ENCODE measurements at regions of chr1 and their contacts with region 1.

Region 1: DNA sequence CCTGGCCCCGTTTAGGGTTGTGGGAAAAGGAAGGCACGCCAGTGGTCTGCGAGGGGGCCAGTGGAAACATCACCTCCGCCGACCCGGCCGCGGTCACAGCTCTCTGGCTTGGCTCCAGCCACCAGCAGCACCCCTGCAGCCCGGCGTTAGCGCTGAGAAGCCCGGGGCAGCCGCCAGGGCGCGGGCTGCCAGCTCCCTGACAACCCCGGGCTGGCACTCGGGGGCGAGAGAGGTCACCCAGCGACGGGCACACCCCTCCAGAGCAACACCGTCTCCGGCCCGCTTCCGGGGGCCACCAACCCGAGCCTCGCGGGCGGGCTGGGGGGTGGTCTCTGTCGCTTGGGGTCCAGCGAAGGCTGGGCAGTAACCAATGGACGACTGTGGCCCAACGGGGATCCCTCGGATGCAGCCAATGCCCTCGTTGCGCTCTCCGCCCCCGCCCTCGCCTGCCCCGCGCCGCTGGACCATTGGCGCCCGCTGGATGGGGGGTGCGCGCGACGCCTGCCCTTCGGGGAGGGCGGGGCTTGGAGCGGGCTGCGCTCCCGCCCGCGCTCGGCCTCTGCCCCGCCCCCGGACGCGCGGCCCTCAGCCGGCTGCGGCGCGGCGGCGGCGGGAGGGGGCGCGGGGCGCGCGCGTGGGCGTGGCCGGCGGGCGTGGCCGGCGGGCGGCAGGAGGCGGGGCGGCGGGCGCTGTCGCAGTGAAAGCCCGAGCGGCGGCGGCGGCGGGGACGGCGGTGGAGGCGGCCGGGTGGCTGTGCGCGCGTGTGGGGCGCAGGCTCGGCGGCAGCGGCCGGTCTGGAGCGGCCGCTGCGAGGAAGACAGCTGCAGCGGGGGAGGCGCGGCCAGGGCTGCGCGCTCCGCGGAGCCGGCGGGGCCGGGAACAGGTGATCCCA is at the start of gene MAN1C1:
- DNase-seq: peak; percentile 71 to 89 (median 85)
- ATAC-seq: peak; percentile 91
- H3K4me3 ChIP-seq: peak within 1 kb of the TSS; percentile 76
- H3K4me3 Mint-ChIP-seq: peak within 1 kb of the TSS; percentile 78 to 99 (median 86)
- H3K27ac ChIP-seq: peak within 1 kb of the TSS; percentile 84
- H3K27ac Mint-ChIP-seq: peak within 1 kb of the TSS; percentile 67 to 93 (median 86)
- H3K4me1 ChIP-seq: peaks cover 13 to 37% of the 10 kb centered on the region in 2 donors
- H3K4me1 Mint-ChIP-seq: peaks cover 36 to 52% (median 45%) of the 10 kb centered on the region in 7 donors
- H3K27me3 ChIP-seq: no peaks in the 10 kb centered on the region
- H3K27me3 Mint-ChIP-seq: peaks cover 0 to 72% (median 0%) of the 10 kb centered on the region in 5 donors
- total RNA-seq, gene MAN1C1: 28.8 to 85.5 (median 69.9) TPM

Region 2: GRCh38 chr1:25487628-25488027 is 128.7 kb before region 1 on chr1:
- CTCF ChIA-PET with region 1: no interaction called
- POLR2A ChIA-PET with region 1: no interaction called
- intact Hi-C with region 1: no loop called
- DNase-seq: peak in 6 of 9 donors; percentile 30 to 48 (median 38)
- ATAC-seq: no peak
- H3K4me3 ChIP-seq: no peak overlapping the region
- H3K4me3 Mint-ChIP-seq: no peak overlapping the region
- H3K27ac ChIP-seq: no peak overlapping the region
- H3K27ac Mint-ChIP-seq: peak overlapping the region in 2 of 9 donors; percentile 7 to 65
- H3K4me1 ChIP-seq: no peaks in the 10 kb centered on the region
- H3K4me1 Mint-ChIP-seq: peaks cover 0 to 26% (median 17%) of the 10 kb centered on the region in 7 donors
- H3K27me3 ChIP-seq: no peaks in the 10 kb centered on the region
- H3K27me3 Mint-ChIP-seq: no peaks in the 10 kb centered on the region

Region 3: GRCh38 chr1:25566730-25567341 is 49.5 kb before region 1 on chr1:
- CTCF ChIA-PET with region 1: interaction called, 4 read pairs
- POLR2A ChIA-PET with region 1: interaction called, 12 read pairs
- intact Hi-C with region 1: loop called in 1 of 2 experiments (anchors 2 kb)
- DNase-seq: peak in 4 of 9 donors; percentile 28 to 73 (median 50)
- ATAC-seq: peak; percentile 60
- H3K4me3 ChIP-seq: no peak overlapping the region
- H3K4me3 Mint-ChIP-seq: peak overlapping the region; percentile 74 to 100 (median 98)
- H3K27ac ChIP-seq: peak overlapping the region; percentile 83
- H3K27ac Mint-ChIP-seq: peak overlapping the region; percentile 72 to 98 (median 96)
- H3K4me1 ChIP-seq: peaks cover 39 to 40% of the 10 kb centered on the region in 2 donors
- H3K4me1 Mint-ChIP-seq: peaks cover 40 to 80% (median 68%) of the 10 kb centered on the region in 7 donors
- H3K27me3 ChIP-seq: no peaks in the 10 kb centered on the region
- H3K27me3 Mint-ChIP-seq: no peaks in the 10 kb centered on the region

Region 4: GRCh38 chr1:25642574-25643108 is 26.3 kb after region 1 on chr1:
- CTCF ChIA-PET with region 1: interaction called, 35 read pairs
- POLR2A ChIA-PET with region 1: interaction called, 125 read pairs
- intact Hi-C with region 1: loop called in 1 of 2 experiments (anchors 1 kb)
- DNase-seq: peak; percentile 29 to 88 (median 84)
- ATAC-seq: peak; percentile 96
- H3K4me3 ChIP-seq: peak overlapping the region; percentile 53
- H3K4me3 Mint-ChIP-seq: peak overlapping the region; percentile 43 to 89 (median 72)
- H3K27ac ChIP-seq: peak overlapping the region; percentile 77
- H3K27ac Mint-ChIP-seq: peak overlapping the region; percentile 81 to 96 (median 92)
- H3K4me1 ChIP-seq: peaks cover 20 to 65% of the 10 kb centered on the region in 2 donors
- H3K4me1 Mint-ChIP-seq: peaks cover 54 to 96% (median 92%) of the 10 kb centered on the region in 7 donors
- H3K27me3 ChIP-seq: no peaks in the 10 kb centered on the region
- H3K27me3 Mint-ChIP-seq: peaks cover 0 to 85% (median 0%) of the 10 kb centered on the region in 5 donors

Region 5: GRCh38 chr1:25675729-25676476 is 59.6 kb after region 1 on chr1:
- CTCF ChIA-PET with region 1: interaction called, 37 read pairs
- POLR2A ChIA-PET with region 1: interaction called, 113 read pairs
- intact Hi-C with region 1: loop called (anchors 1 kb)
- DNase-seq: peak; percentile 24 to 91 (median 86)
- ATAC-seq: peak; percentile 89
- H3K4me3 ChIP-seq: peak overlapping the region; percentile 31
- H3K4me3 Mint-ChIP-seq: peak overlapping the region; percentile 80 to 92 (median 84)
- H3K27ac ChIP-seq: peak overlapping the region; percentile 67
- H3K27ac Mint-ChIP-seq: peak overlapping the region; percentile 70 to 98 (median 94)
- H3K4me1 ChIP-seq: peaks cover 34 to 89% of the 10 kb centered on the region in 2 donors
- H3K4me1 Mint-ChIP-seq: peaks cover 58 to 96% (median 94%) of the 10 kb centered on the region in 7 donors
- H3K27me3 ChIP-seq: no peaks in the 10 kb centered on the region
- H3K27me3 Mint-ChIP-seq: peaks cover 0 to 80% (median 0%) of the 10 kb centered on the region in 5 donors

Region 6: GRCh38 chr1:25774921-25775801 is 158.8 kb after region 1 on chr1:
- CTCF ChIA-PET with region 1: interaction called, 15 read pairs
- POLR2A ChIA-PET with region 1: interaction called, 26 read pairs
- intact Hi-C with region 1: loop called (anchors 1 to 2 kb)
- DNase-seq: peak; percentile 53 to 97 (median 95)
- ATAC-seq: peak; percentile 92
- H3K4me3 ChIP-seq: peak overlapping the region; percentile 49
- H3K4me3 Mint-ChIP-seq: peak overlapping the region; percentile 71 to 91 (median 84)
- H3K27ac ChIP-seq: peak overlapping the region; percentile 77
- H3K27ac Mint-ChIP-seq: peak overlapping the region; percentile 79 to 99 (median 97)
- H3K4me1 ChIP-seq: peaks cover 35 to 78% of the 10 kb centered on the region in 2 donors
- H3K4me1 Mint-ChIP-seq: peaks cover 52 to 96% (median 86%) of the 10 kb centered on the region in 7 donors
- H3K27me3 ChIP-seq: no peaks in the 10 kb centered on the region
- H3K27me3 Mint-ChIP-seq: peaks cover 0 to 45% (median 0%) of the 10 kb centered on the region in 5 donors

Region 7: DNA sequence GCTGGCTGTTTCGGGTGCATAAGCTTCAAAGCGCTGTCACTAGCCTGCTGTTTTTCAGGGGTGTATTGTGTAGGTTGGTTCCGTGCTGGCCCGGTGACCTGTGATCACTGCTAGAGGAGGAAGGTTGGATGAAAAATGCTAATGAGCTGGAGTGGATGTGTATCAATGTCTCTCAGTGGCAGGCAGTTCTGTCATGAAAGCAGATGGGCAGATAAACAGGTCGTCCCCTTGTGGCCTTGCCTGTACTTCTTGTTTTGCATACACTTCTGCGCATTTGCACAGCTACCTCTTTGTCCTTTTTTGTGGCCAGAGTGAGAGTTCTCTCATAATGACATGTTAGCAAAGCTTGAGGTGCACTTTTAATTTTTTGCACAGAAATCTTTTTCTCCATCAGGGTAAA is 186.6 kb after region 1 on chr1:
- CTCF ChIA-PET with region 1: interaction called, 106 read pairs
- POLR2A ChIA-PET with region 1: interaction called, 31 read pairs
- intact Hi-C with region 1: no loop called
- DNase-seq: peak in 1 of 9 donors; percentile 39
- ATAC-seq: peak; percentile 30
- H3K4me3 ChIP-seq: no peak overlapping the region
- H3K4me3 Mint-ChIP-seq: peak overlapping the region; percentile 19 to 90 (median 63)
- H3K27ac ChIP-seq: no peak overlapping the region
- H3K27ac Mint-ChIP-seq: peak overlapping the region in 6 of 9 donors; percentile 2 to 61 (median 42)
- H3K4me1 ChIP-seq: peaks cover 12 to 40% of the 10 kb centered on the region in 2 donors
- H3K4me1 Mint-ChIP-seq: peaks cover 26 to 72% (median 63%) of the 10 kb centered on the region in 7 donors
- H3K27me3 ChIP-seq: no peaks in the 10 kb centered on the region
- H3K27me3 Mint-ChIP-seq: peaks cover 0 to 26% (median 0%) of the 10 kb centered on the region in 5 donors

Region 8: GRCh38 chr1:26111530-26112406 is 495.4 kb after region 1 on chr1 and contains the start of gene PDIK1L:
- CTCF ChIA-PET with region 1: no interaction called
- POLR2A ChIA-PET with region 1: no interaction called
- intact Hi-C with region 1: loop called in 1 of 2 experiments (anchors 2 kb)
- DNase-seq: peak; percentile 91 to 95 (median 94)
- ATAC-seq: peak; percentile 93
- H3K4me3 ChIP-seq: peak within 1 kb of the TSS; percentile 93
- H3K4me3 Mint-ChIP-seq: peak within 1 kb of the TSS; percentile 86 to 99 (median 93)
- H3K27ac ChIP-seq: peak within 1 kb of the TSS; percentile 84
- H3K27ac Mint-ChIP-seq: peak within 1 kb of the TSS; percentile 84 to 98 (median 92)
- H3K4me1 ChIP-seq: peaks cover 12 to 19% of the 10 kb centered on the region in 2 donors
- H3K4me1 Mint-ChIP-seq: peaks cover 6 to 44% (median 34%) of the 10 kb centered on the region in 7 donors
- H3K27me3 ChIP-seq: no peaks in the 10 kb centered on the region
- H3K27me3 Mint-ChIP-seq: no peaks in the 10 kb centered on the region
- total RNA-seq, gene PDIK1L: 9.1 to 29.6 (median 20.3) TPM

Measured in naive thymus-derived CD4-positive, alpha-beta T cell (primary cell).